PC-3 (cell line): ENCODE measurements at regions of chr7 and their contacts with region 1.

Region 1: GRCh38 chr7:22726345-22727185 is 435 bp upstream of the IL6 start:
- DNase-seq: peak; percentile 92
- ATAC-seq: peak; percentile 69
- H3K4me3 ChIP-seq: peak overlapping the region; percentile 74
- H3K27ac ChIP-seq: peak overlapping the region; percentile 97
- H3K4me1 ChIP-seq: peaks cover 66% of the 10 kb centered on the region
- H3K27me3 ChIP-seq: no peaks in the 10 kb centered on the region
- CTCF ChIP-seq: peak; percentile 76

Region 2: DNA sequence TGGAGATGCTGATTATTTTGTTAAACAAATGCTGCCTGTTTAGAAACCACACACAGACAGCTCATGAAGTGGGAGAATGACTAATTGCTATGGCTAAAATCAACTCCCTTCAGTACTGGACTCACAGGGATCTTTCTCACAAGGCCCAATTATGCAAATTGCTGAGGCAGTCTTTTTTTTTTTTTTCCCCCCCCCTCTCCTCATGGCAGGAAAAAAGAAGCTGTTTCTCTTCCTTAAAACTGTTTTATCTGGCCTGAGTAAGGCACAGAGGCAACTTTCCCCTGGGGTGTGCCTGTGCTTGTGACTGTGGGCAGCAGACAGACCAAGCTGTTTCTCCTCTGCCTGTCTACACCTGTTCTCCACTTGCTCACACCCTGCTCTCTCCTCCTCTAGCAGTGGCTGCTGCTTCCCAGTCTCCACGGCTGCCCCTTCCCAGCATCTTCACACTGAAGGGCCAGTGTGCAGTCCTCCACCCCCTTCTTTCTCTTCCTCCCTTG is 161.2 kb before region 1 on chr7:
- CTCF ChIA-PET with region 1: interaction called, 88 read pairs
- POLR2A ChIA-PET with region 1: interaction called, 15 read pairs
- intact Hi-C with region 1: loop called (anchors 1 kb)
- DNase-seq: peak; percentile 60
- ATAC-seq: peak; percentile 16
- H3K4me3 ChIP-seq: peak overlapping the region; percentile 14; the same call in 1 of the 2 replicates
- H3K27ac ChIP-seq: peak overlapping the region; percentile 95
- H3K4me1 ChIP-seq: peaks cover 76% of the 10 kb centered on the region
- H3K27me3 ChIP-seq: no peaks in the 10 kb centered on the region
- CTCF ChIP-seq: no peak

Region 3: DNA sequence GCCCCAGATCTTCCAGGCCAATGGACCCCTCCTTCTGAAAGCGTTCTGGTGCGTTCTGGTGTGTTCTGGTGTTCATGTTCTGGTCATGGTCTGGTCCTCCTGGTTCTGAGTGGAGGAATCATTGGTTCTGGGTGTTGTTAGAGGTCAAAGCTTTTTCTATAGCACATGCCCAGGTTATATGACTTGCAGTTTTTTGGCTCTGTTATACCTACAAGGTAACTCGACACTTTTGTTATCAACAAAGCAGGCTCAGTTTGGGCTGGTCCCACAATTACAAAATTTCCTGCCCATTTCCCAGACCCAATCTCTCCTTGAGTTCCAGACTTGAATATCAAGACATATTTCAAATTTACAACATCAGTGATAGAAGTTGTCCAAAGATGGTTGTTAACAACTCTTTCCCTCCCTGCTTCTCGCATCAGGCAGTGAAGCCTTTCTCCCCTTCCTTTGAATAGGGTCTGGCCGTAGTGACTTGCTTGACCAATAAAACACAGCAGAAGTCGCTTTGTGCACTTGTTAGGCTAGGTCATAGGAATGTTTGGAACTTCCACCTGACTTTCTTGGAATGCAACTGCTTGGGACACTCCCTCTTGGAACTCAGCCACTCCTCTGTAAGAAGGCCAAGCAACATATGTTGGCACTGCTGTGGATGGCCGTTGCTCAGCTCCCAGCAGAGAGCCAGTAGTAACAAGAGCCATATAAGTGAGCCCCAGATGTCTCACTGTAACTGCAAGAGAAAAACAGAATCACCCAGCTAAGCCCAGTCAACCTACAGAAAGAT is 143.5 kb before region 1 on chr7:
- CTCF ChIA-PET with region 1: interaction called, 32 read pairs
- POLR2A ChIA-PET with region 1: interaction called, 12 read pairs
- intact Hi-C with region 1: loop called (anchors 2 kb)
- DNase-seq: peak; percentile 96
- ATAC-seq: peak; percentile 90
- H3K4me3 ChIP-seq: no peak overlapping the region
- H3K27ac ChIP-seq: peak overlapping the region; percentile 67
- H3K4me1 ChIP-seq: peaks cover 36% of the 10 kb centered on the region
- H3K27me3 ChIP-seq: no peaks in the 10 kb centered on the region
- CTCF ChIP-seq: no peak

Region 4: DNA sequence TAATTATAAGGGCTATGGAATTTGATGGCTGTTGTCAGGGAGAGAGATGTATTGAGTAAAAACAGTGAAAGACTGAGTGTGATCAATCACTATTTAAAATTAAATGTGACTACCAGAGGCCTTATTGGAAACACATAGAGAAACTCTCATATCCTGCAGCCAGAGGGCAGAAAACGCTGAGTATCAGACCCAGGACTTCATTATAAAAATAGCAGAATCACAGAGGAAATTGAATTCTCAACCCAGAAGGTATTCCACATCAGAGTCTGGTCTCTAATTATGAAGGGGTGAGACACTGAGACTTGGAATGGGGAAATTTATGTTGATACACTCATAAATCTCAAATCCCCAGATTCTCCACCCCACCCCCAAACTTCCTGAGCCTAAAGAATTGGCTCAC is 69.1 kb before region 1 on chr7:
- CTCF ChIA-PET with region 1: interaction called, 6 read pairs
- POLR2A ChIA-PET with region 1: no interaction called
- intact Hi-C with region 1: loop called (anchors 1 kb)
- DNase-seq: no peak
- ATAC-seq: no peak
- H3K4me3 ChIP-seq: no peak overlapping the region
- H3K27ac ChIP-seq: no peak overlapping the region
- H3K4me1 ChIP-seq: no peaks in the 10 kb centered on the region
- H3K27me3 ChIP-seq: no peaks in the 10 kb centered on the region
- CTCF ChIP-seq: no peak

Region 5: GRCh38 chr7:22672846-22673652 is 53.5 kb before region 1 on chr7:
- CTCF ChIA-PET with region 1: interaction called, 13 read pairs
- POLR2A ChIA-PET with region 1: interaction called, 11 read pairs
- intact Hi-C with region 1: loop called (anchors 1 kb)
- DNase-seq: peak; percentile 96
- ATAC-seq: peak; percentile 97
- H3K4me3 ChIP-seq: no peak overlapping the region
- H3K27ac ChIP-seq: peak overlapping the region; percentile 96
- H3K4me1 ChIP-seq: peaks cover 63% of the 10 kb centered on the region
- H3K27me3 ChIP-seq: no peaks in the 10 kb centered on the region
- CTCF ChIP-seq: no peak

Region 6: GRCh38 chr7:22833113-22833855 is 106.7 kb after region 1 on chr7:
- CTCF ChIA-PET with region 1: no interaction called
- POLR2A ChIA-PET with region 1: no interaction called
- intact Hi-C with region 1: no loop called
- DNase-seq: no peak
- ATAC-seq: no peak
- H3K4me3 ChIP-seq: no peak overlapping the region
- H3K27ac ChIP-seq: no peak overlapping the region
- H3K4me1 ChIP-seq: peaks cover 4% of the 10 kb centered on the region; the same call in 1 of the 2 replicates
- H3K27me3 ChIP-seq: no peaks in the 10 kb centered on the region
- CTCF ChIP-seq: no peak

Region 7: DNA sequence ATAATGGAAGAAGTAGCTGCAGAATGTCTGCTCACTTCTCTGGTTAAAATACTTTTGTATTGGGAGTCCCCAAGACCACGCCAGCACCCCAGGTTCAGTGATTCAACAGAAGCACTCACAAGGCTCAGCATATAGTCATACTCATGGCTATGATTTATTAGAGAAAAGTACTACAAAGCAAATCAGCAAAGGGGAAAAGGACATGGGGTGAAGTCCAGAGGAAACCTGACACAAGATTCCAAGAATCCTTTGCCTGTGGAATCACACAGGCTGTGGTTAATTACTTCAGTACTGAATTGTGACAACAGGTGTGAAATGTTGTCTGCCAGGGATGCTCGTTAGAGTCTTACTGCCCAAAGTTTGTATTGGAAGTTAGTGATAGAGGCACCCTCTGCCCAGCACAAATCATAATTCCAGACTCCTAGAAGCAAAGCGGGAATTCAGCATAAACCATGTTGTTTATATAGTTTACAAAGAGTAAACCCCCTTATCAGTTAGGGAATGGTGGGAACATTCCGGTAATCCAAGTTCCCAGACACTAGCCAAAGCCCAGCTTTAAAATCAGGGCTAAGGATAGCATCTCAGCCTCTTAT is 208.0 kb after region 1 on chr7:
- CTCF ChIA-PET with region 1: no interaction called
- POLR2A ChIA-PET with region 1: no interaction called
- intact Hi-C with region 1: no loop called
- DNase-seq: no peak
- ATAC-seq: no peak
- H3K4me3 ChIP-seq: no peak overlapping the region
- H3K27ac ChIP-seq: no peak overlapping the region
- H3K4me1 ChIP-seq: no peaks in the 10 kb centered on the region
- H3K27me3 ChIP-seq: no peaks in the 10 kb centered on the region
- CTCF ChIP-seq: no peak

Region 8: DNA sequence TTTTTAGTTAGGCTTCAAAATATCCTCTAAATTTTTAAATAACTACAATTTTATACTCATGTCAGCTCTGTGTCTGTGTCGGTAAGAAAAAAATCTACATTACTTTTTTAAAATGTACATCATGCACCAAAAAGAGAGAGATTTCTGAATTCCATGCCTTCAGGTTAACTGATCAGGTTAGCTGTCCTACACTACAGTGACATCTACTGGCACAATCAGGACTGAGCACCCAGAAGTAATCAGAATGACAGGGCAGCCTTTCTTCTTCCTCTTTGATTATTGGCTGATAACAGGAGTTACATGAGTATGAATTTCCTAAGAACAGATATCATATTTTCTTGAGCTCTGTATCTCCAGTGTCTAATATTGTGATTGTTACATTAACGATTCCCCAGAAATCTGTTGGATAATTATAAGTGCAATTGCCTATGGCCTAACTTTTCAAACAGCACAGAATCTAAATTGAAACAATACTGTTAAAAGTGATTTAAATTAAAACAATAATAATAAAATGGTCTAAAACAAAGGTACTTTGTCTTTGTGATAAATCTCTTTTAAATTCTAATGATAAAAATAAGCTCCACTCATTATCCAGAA is 329.1 kb after region 1 on chr7:
- CTCF ChIA-PET with region 1: interaction called, 5 read pairs
- POLR2A ChIA-PET with region 1: no interaction called
- intact Hi-C with region 1: loop called (anchors 1 kb)
- DNase-seq: peak; percentile 81
- ATAC-seq: peak; percentile 93
- H3K4me3 ChIP-seq: no peak overlapping the region
- H3K27ac ChIP-seq: no peak overlapping the region
- H3K4me1 ChIP-seq: no peaks in the 10 kb centered on the region
- H3K27me3 ChIP-seq: no peaks in the 10 kb centered on the region
- CTCF ChIP-seq: peak; percentile 95